ENCODE measurements at regions of chr6 and their contacts with region 1.

Region 1: GRCh38 chr6:87322304-87323212 is at the start of gene SMIM8:
- DNase-seq: peak; percentile 89 to 94
- H3K4me3 ChIP-seq: peak within 1 kb of the TSS; percentile 75 to 98 (median 86)
- H3K27ac ChIP-seq: peak within 1 kb of the TSS; percentile 17 to 88 (median 79)
- H3K4me1 ChIP-seq: peaks cover 0 to 13% (median 7%) of the 10 kb centered on the region in 4 donors
- H3K27me3 ChIP-seq: no peaks in the 10 kb centered on the region
- CTCF ChIP-seq: peak in 6 of 7 experiments; percentile 56 to 99 (median 98)
- EP300 ChIP-seq: no peak
- POLR2A ChIP-seq: no peak
- total RNA-seq, gene SMIM8: 0.87 to 25.2 (median 7.0) TPM

Region 2: DNA sequence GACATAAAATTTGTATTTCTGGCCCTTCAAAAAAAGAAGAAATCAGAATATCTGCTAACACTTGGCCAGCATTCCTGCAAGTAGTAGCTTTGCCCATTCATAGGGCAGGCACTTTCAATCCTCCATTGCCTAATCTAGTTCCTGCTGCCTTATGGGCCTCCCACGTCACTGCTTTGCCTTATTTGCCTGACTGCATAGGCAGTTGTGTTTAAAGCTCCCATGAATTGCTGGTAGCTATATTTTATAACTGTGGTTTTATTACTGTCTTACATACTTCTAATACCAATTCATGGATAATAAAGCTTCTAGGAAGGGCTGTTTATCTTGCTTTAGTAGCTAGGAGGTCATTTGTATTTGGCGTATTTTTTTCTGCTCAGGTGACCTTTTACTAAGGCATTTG is 142.5 kb after region 1 on chr6:
- intact Hi-C with region 1: loop called (anchors 10 kb)
- DNase-seq: no peak
- H3K4me3 ChIP-seq: no peak overlapping the region
- H3K27ac ChIP-seq: no peak overlapping the region
- H3K4me1 ChIP-seq: no peaks in the 10 kb centered on the region
- H3K27me3 ChIP-seq: no peaks in the 10 kb centered on the region
- CTCF ChIP-seq: no peak
- EP300 ChIP-seq: no peak
- POLR2A ChIP-seq: no peak

Measured in stomach (tissue), 19 donors.